ENCODE measurements at regions of chr1 and their contacts with region 1.

Region 1: DNA sequence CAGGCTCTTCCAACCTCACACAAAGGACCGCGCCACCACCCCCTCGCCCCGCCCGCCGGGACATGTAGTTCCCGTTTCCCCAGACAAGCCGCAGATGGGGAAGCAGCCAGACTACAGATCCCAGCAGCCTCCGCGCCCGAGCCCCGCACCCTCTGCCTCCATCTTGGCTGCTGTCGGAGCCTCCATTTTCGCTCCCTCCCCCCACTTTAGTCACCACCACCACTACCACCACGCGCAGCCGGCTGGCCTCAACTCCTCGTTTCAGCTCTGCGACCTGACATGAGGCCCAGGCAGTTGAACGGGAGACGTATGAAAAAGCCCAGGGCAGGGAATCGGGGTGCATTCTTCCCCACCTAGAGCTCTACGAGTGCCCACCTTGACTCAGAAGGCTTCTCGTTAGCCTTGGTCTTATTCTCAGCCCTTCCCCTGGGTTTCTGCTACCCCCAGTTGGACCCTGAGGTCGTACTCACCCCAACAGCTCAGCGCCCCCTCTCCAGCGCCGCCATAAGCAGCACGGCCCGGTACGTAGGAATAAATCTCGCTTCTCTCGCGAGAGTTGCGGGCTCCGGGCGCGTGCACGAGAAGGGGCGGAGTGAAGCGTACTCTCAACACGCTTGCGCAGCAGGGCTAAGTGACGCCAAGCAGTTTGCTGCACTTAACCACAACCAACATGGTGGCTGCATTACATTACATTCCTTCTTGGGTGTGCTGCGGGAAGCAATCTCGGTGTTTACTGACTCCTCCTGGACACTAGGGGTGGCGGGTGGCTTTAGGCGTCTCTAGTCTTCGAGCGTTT is at the start of gene CSDE1:
- DNase-seq: peak; percentile 95
- H3K4me3 ChIP-seq: peak within 1 kb of the TSS; percentile 70 to 82 (median 75)
- H3K27ac ChIP-seq: peak within 1 kb of the TSS; percentile 98
- H3K4me1 ChIP-seq: peaks cover 20% of the 10 kb centered on the region
- H3K27me3 ChIP-seq: no peaks in the 10 kb centered on the region
- CTCF ChIP-seq: peak; percentile 50 to 60
- total RNA-seq, gene CSDE1: 493 to 641 TPM

Region 2: DNA sequence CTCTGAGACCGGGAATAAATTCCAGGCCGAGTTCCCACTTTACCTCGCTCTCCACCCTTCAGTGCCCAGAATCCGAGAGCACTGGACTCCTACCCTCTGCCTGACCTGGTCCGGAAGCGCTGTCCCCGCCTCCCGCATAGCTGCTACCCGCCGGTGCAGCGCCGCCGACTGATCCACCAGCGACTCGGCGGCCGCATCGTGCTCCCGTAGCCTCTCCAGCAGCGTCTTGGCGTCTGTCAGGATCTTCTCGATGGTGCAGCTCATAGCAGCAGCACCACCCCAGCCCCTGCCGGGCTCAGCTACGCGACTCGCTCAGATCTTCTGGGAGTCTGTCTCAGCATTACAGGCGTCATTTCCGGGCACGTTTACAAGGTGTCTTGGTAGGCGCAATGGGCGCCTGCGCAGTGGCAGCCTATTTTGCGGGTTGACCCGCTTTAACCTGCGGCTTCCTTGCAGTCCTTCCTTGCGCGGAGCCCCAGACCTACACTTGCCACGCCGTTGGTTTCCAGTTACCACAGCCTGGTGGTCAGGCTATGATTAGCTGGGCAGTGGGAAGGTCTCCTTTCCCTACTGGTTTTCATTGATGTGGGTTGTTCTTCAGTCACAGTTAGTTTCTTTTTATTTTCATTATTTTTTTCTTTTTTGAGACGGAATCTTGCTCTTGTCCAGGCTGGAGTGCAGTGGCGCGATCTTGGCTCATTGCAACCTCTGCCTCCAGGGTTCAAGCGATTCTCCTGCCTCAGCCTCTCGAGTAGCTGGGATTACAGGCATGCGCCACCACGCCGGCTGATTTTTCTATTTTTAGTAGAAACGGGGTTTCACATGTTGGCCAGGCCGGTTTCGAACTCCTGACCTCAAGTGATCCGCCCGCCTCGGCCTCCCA is 22.9 kb after region 1 on chr1 and contains the start of gene SIKE1:
- CTCF ChIA-PET with region 1: no interaction called
- dilution Hi-C with region 1: no loop called
- in situ Hi-C with region 1: no loop called
- intact Hi-C with region 1: loop called (anchors 2 kb)
- DNase-seq: peak; percentile 90
- H3K4me3 ChIP-seq: peak within 1 kb of the TSS; percentile 60 to 75 (median 62)
- H3K27ac ChIP-seq: peak within 1 kb of the TSS; percentile 66
- H3K4me1 ChIP-seq: peaks cover 7% of the 10 kb centered on the region
- H3K27me3 ChIP-seq: no peaks in the 10 kb centered on the region
- CTCF ChIP-seq: no peak
- total RNA-seq, gene SIKE1: 55.7 to 71.5 TPM

Region 3: DNA sequence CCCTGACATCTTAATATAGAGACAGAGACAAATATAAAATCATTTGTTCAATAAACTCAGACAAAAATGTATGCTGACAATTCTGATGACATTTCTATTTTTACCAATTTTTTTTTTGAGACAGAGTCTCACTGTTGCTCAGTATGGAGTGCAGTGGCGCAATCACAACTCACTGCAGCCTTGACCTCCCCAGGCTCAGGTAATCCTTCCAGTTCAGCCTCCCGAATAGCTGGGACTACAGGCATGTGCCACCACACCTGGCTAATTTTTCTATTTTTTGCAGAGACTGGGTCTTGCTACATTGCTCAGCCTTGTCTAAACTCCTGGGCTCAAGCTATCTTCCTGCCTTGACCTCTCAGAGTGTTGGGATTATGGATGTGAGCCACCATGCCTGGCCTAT is 36.4 kb after region 1 on chr1:
- CTCF ChIA-PET with region 1: no interaction called
- dilution Hi-C with region 1: loop called (anchors 5 kb)
- in situ Hi-C with region 1: no loop called
- intact Hi-C with region 1: no loop called
- DNase-seq: no peak
- H3K4me3 ChIP-seq: no peak overlapping the region
- H3K27ac ChIP-seq: no peak overlapping the region
- H3K4me1 ChIP-seq: no peaks in the 10 kb centered on the region
- H3K27me3 ChIP-seq: no peaks in the 10 kb centered on the region
- CTCF ChIP-seq: no peak

Region 4: DNA sequence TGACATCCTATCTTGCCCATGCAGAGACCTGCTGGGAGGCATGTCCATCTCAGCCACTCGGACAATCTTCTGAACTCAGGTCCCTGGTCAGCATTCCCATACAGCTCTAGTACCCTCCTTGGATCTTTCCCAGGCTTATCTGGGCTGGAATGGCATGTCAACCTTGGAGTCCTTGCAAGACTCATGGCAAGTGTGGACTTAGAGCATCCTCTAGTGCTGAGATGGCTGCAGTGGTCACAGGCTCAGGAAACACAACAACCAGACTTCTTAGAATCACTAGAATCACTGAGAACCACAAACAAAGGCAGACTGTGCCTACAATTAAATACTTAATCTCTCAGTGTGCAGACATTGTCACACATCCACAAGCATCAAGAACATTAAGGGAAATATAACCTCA is 198.9 kb after region 1 on chr1:
- CTCF ChIA-PET with region 1: no interaction called
- dilution Hi-C with region 1: no loop called
- in situ Hi-C with region 1: no loop called
- intact Hi-C with region 1: loop called (anchors 5 kb)
- DNase-seq: peak; percentile 23
- H3K4me3 ChIP-seq: no peak overlapping the region
- H3K27ac ChIP-seq: no peak overlapping the region
- H3K4me1 ChIP-seq: no peaks in the 10 kb centered on the region
- H3K27me3 ChIP-seq: peaks cover 2% of the 10 kb centered on the region
- CTCF ChIP-seq: peak; percentile 74 to 84

Region 5: DNA sequence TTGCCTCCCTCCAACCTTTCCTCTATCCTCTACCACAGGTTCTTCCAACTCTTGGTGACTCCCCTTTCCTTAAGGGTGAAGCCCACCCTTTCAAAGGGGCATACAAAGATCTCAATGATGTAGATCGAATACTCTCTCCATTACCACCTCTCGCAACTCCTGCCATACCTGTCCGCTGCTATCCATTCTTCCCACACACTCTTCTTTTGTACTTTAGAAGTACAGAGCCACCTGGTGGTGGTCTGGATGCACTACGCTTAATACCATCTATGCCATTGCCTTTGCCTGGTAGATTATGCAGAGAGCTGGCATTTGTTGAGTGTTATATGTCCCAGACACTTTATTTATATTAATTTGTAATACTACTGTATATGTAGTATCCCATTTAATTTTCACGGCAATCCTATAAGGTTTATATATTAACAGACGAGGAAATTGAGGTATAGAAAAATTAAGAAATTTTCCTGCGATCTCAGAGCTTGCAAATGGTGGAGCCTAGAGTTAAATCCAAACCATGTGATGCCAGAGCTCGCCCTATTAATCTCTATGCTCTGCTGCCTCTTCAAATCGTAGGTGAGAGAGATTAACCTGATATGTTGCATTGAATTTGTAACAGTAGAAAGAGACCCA is 294.9 kb after region 1 on chr1:
- CTCF ChIA-PET with region 1: no interaction called
- dilution Hi-C with region 1: no loop called
- in situ Hi-C with region 1: no loop called
- intact Hi-C with region 1: loop called (anchors 10 kb)
- DNase-seq: peak; percentile 63
- H3K4me3 ChIP-seq: no peak overlapping the region
- H3K27ac ChIP-seq: no peak overlapping the region
- H3K4me1 ChIP-seq: peaks cover 12% of the 10 kb centered on the region
- H3K27me3 ChIP-seq: no peaks in the 10 kb centered on the region
- CTCF ChIP-seq: peak; percentile 87 to 94

Measured in mammary epithelial cell (primary cell).